ENCODE measurements at regions of chr15 and their contacts with region 1.

Region 1: DNA sequence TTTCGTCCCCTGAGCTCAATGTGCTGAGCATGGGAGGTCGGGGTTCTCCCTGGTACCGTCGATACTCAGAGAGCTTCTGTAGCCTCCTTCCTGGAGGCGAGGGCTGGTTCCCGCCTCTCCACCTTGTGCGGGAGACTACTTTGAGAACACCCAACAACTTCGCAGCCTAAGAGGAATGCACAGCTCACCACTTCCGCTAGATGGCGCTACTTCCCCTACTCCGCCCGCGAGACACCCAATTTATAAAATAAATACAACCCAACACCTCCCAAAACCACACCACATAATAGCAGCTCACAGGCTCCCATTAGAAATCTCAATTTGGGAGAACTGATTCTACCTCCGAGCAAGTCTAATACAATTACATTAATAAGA is 1.2 kb downstream of the RGMA start:
- DNase-seq: peak; percentile 52
- H3K4me3 ChIP-seq: peak overlapping the region in 2 of 3 experiments; percentile 48 to 52
- H3K27ac ChIP-seq: no peak overlapping the region
- H3K4me1 ChIP-seq: peaks cover 9% of the 10 kb centered on the region
- H3K27me3 ChIP-seq: peaks cover 5% of the 10 kb centered on the region
- CTCF ChIP-seq: peak; percentile 81 to 92

Region 2: GRCh38 chr15:92322566-92323355 is 765.1 kb before region 1 on chr15:
- CTCF ChIA-PET with region 1: no interaction called
- dilution Hi-C with region 1: no loop called
- in situ Hi-C with region 1: no loop called
- intact Hi-C with region 1: no loop called
- DNase-seq: no peak
- H3K4me3 ChIP-seq: no peak overlapping the region
- H3K27ac ChIP-seq: no peak overlapping the region
- H3K4me1 ChIP-seq: no peaks in the 10 kb centered on the region
- H3K27me3 ChIP-seq: peaks cover 3% of the 10 kb centered on the region
- CTCF ChIP-seq: no peak

Region 3: DNA sequence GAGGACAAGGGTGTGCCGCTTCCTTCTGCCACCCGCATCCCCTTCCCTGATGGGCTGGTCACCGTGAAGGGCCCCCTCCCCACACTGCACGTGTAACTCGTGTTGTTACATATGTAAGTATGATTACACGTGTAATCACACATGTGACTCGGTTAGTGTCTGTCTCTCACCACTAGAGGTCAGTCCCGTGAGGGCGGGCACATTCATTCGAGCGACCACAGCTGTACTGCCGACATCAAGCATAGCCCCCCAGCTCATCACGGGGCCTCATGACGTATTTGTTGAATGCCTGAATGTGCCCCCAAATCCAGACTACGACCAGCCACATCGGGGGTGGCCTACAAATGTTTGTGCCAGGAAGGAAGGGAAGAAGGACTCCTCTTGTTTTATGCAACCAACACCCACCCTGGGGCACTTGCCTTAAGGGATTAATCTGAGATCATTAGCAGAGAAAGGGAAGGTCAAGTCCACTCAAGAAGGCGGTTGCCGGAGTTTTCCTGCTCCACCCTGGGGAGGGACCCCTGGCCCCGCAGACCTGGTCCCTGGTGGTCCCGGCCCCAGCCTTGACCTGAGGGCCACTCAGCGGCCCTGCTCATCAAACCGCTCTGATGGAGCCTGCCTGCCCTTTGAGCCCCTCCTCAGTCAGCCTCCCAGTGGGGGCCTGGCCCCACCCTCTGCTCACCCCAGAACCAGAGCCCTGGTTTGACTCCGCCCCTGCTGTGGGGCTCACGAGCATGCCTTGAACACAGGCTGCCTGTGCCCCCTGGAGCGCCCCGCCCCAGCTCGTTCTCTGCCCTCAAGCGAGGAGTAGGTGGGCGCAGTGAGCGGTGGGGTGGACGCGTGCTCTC is 51.6 kb before region 1 on chr15:
- CTCF ChIA-PET with region 1: interaction called, 9 read pairs
- dilution Hi-C with region 1: no loop called
- in situ Hi-C with region 1: no loop called
- intact Hi-C with region 1: loop called (anchors 5 kb)
- DNase-seq: no peak
- H3K4me3 ChIP-seq: no peak overlapping the region
- H3K27ac ChIP-seq: no peak overlapping the region
- H3K4me1 ChIP-seq: peaks cover 3% of the 10 kb centered on the region
- H3K27me3 ChIP-seq: no peaks in the 10 kb centered on the region
- CTCF ChIP-seq: peak; percentile 19 to 39

Region 4: GRCh38 chr15:93617443-93617842 is 529.6 kb after region 1 on chr15:
- CTCF ChIA-PET with region 1: interaction called, 41 read pairs
- dilution Hi-C with region 1: no loop called
- in situ Hi-C with region 1: no loop called
- intact Hi-C with region 1: loop called (anchors 2 kb)
- DNase-seq: no peak
- H3K4me3 ChIP-seq: no peak overlapping the region
- H3K27ac ChIP-seq: no peak overlapping the region
- H3K4me1 ChIP-seq: no peaks in the 10 kb centered on the region
- H3K27me3 ChIP-seq: peaks cover 2% of the 10 kb centered on the region
- CTCF ChIP-seq: no peak

Region 5: GRCh38 chr15:93974804-93975481 is 887.1 kb after region 1 on chr15:
- CTCF ChIA-PET with region 1: interaction called, 33 read pairs
- dilution Hi-C with region 1: no loop called
- in situ Hi-C with region 1: loop called in 1 of 2 experiments (anchors 25 kb)
- intact Hi-C with region 1: loop called (anchors 1 kb)
- DNase-seq: peak; percentile 33
- H3K4me3 ChIP-seq: no peak overlapping the region
- H3K27ac ChIP-seq: no peak overlapping the region
- H3K4me1 ChIP-seq: no peaks in the 10 kb centered on the region
- H3K27me3 ChIP-seq: no peaks in the 10 kb centered on the region
- CTCF ChIP-seq: peak; percentile 48 to 77

Region 6: DNA sequence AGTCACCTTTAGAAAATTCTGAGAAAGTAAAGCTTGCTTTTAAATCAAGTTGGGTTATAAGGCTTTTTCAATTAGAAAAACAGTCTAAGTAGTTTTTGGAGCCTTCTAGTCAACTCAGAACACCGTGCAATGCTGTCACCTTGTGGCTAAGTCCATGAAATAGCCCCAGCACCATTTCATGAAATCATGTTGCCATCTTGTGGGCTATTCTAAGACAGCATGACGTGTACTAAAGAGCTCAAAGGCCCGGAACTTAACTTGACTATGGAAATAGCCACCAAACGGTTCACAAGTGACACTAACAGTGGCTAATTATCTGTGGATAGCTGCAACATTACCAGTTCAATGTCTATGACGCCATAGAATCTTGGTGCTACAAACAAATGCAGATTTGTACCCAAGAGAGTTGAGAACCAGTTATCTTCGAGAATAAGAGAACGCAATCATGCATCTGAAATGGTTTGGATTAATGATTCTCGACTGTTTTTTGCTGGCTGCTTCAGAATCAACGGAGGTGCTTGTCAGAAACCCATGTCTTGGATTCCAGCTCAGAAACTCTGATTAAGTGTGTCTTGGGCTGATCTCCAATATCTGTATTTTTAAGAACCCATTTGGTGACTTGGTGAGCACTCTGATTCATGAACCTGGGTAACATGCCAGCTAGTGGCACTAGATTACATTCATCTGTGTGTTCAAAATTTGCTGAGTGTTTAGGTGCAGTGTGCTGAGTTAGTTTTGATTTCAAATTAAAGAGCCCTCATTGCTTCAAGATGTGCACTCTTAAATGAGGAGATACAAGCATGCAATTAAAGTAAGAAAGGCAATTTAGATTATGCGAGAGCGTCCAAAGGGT is 1032.3 kb after region 1 on chr15:
- CTCF ChIA-PET with region 1: interaction called, 23 read pairs
- dilution Hi-C with region 1: no loop called
- in situ Hi-C with region 1: no loop called
- intact Hi-C with region 1: loop called (anchors 1 kb)
- DNase-seq: peak; percentile 75
- H3K4me3 ChIP-seq: no peak overlapping the region
- H3K27ac ChIP-seq: no peak overlapping the region
- H3K4me1 ChIP-seq: no peaks in the 10 kb centered on the region
- H3K27me3 ChIP-seq: no peaks in the 10 kb centered on the region
- CTCF ChIP-seq: peak; percentile 97 to 99